PC-3 (cell line): ENCODE measurements at regions of chr2 and their contacts with region 1.

Region 1: GRCh38 chr2:106193977-106194778 is at the start of gene UXS1:
- DNase-seq: peak; percentile 97
- ATAC-seq: peak; percentile 64
- H3K4me3 ChIP-seq: peak within 1 kb of the TSS; percentile 81
- H3K27ac ChIP-seq: 0 out of 2 replicates have a peak within 1 kb of the TSS, but pooled peaks have one; percentile 2
- H3K4me1 ChIP-seq: peaks cover 37% of the 10 kb centered on the region
- H3K27me3 ChIP-seq: no peaks in the 10 kb centered on the region
- CTCF ChIP-seq: no peak
- total RNA-seq, gene UXS1: 45.8 and 49.1 TPM in 2 replicates

Region 2: DNA sequence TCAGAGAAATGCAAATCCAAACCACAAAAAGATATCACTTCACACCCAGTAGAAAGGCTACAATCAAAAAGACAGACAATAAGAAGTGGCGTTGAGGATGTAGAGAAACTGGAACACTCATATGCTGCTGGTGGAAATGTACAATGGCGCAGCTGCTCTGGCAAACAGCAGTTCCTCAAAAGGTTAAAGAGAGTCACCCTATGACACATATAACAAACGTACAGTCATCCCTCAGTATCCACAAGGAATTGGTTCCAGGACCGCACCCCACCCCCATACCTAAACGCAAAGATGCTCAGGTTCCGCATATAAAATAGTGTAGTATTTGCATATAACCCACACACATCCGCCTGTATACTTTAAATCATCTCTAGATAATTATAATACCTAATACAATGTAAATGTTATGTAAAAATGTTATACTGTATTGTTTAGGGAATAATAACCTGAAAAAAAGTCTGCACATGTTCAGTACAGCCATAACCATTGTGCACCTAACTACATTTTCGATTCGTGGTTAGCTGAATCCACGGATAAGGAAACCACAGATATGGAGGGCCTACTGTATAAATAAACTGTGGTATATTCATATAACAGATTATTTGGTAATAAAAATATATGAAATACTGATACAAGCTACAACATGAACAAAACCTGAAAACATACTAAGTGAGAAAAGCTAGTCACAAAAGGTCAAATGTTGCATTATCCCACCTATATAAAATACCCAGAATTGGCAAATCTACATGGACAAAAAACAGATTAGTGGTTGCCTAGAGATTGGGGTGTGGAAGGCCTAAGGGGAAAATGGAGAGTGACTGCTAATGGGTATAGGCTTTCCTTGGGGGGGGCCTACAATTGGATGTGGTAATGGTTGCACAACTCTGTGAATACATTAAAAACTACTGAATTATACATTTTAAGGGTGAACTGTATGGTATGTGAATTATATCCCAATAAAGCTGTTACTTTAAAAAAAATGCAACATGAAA is 37.6 kb before region 1 on chr2:
- CTCF ChIA-PET with region 1: no interaction called
- POLR2A ChIA-PET with region 1: no interaction called
- intact Hi-C with region 1: loop called (anchors 1 kb)
- DNase-seq: peak; percentile 93
- ATAC-seq: peak; percentile 90
- H3K4me3 ChIP-seq: peak overlapping the region; percentile 21; the same call in 1 of the 2 replicates
- H3K27ac ChIP-seq: peak overlapping the region; percentile 88
- H3K4me1 ChIP-seq: peaks cover 37% of the 10 kb centered on the region
- H3K27me3 ChIP-seq: no peaks in the 10 kb centered on the region
- CTCF ChIP-seq: no peak

Region 3: DNA sequence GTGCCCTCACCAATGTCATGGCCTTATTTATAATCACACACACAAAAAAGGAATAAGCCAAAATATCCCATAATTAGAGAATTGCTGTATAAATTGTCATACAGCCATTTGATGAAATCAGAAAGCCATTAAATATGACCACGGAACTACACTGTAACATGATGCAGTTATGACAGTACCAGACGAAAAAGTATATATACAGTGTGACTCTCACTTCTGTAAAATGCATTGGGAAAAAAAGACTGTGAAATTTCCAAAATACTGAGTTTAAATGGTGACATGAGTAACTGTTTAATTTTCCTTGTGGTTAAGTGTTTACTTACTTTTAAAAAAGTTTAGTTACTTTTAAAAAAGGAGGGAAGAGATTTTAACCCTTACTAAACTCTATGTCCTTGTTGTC is 25.5 kb before region 1 on chr2:
- CTCF ChIA-PET with region 1: no interaction called
- POLR2A ChIA-PET with region 1: no interaction called
- intact Hi-C with region 1: loop called (anchors 1 kb)
- DNase-seq: peak; percentile 66
- ATAC-seq: peak; percentile 88
- H3K4me3 ChIP-seq: no peak overlapping the region
- H3K27ac ChIP-seq: peak overlapping the region; percentile 79
- H3K4me1 ChIP-seq: peaks cover 30% of the 10 kb centered on the region
- H3K27me3 ChIP-seq: no peaks in the 10 kb centered on the region
- CTCF ChIP-seq: no peak

Region 4: GRCh38 chr2:106205488-106205887 is 11.3 kb after region 1 on chr2:
- CTCF ChIA-PET with region 1: no interaction called
- POLR2A ChIA-PET with region 1: no interaction called
- intact Hi-C with region 1: no loop called
- DNase-seq: no peak
- ATAC-seq: no peak
- H3K4me3 ChIP-seq: no peak overlapping the region
- H3K27ac ChIP-seq: no peak overlapping the region
- H3K4me1 ChIP-seq: no peaks in the 10 kb centered on the region
- H3K27me3 ChIP-seq: 0 out of 2 replicates have a peak, but pooled peaks cover 3% of the 10 kb centered on the region
- CTCF ChIP-seq: no peak